Caco-2 (cell line): ENCODE measurements at regions of chr10 and their contacts with region 1.

Region 1: DNA sequence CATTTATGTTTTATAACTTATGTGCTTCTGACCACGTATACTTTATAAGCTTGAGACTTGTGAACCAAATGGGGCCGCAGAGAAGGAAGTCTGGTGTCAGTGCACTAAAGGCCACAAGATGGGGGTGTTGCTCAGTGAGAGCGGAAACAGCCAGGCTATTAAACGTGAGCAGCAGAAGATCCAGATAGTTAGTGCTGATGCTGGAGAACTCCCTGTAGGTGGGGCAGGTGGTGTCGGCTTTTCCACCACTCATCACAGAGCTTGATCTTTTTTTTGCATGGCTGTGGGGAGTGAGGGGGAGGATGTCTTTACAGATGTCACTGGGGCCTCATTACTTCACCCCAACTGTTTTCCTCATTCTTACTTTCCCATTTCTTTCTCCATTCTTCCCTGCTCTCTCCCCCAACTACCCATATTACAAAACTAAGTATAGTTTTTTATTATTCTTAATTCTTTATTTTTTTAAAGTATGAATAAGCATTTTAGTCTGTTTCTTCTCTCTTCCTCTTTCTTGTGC is 34.7 kb downstream of the ACADSB start:
- DNase-seq: peak; percentile 70 to 76
- H3K4me3 ChIP-seq: no peak overlapping the region
- H3K4me3 Mint-ChIP-seq: no peak overlapping the region
- H3K27ac Mint-ChIP-seq: no peak overlapping the region
- H3K4me1 ChIP-seq: no peaks in the 10 kb centered on the region
- H3K4me1 Mint-ChIP-seq: no peaks in the 10 kb centered on the region
- H3K27me3 ChIP-seq: no peaks in the 10 kb centered on the region
- H3K27me3 Mint-ChIP-seq: no peaks in the 10 kb centered on the region
- CTCF ChIP-seq: peak; percentile 81 to 85

Region 2: DNA sequence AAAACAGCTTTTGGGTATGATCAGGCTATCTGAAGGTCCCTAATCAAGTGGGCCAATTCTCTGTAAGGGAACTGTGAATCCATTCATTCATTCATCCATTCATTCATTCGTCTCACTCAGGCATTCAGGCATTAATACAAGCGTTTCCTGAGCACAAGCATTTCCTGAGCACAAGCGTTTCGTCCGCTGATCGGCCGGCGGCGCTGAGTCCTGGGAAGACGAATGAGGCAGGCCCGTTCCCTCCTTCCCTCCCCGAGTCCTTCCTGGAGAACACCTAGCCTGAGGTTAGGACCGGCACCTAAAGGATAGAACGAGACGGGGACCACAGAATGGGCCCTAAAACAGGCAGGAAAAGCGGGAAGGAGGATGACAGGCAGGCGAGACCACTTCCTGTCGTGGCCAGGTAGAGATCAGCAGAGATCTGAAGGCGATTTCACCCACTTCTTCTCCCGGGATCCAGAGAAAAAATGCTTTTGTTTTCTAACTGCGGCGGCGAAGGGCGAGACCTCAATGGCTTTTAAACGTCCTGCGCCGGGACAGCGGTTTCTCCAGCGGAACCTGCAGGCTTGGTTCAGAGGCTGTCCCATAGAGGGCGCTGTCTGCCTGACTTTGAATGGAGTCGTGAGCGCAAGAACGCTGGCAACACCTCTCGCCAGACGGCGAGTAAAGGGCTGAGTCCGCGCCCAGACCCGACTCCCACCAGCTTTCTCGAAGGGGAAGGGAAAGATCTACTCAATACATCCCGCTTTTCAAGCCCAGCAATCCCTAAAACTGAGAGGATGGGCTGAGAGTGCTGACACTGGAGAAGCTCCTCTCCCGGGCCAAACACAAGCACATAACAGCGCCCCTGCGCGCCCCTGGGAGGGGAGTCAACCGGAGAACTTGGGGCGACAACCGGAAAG is 89.4 kb after region 1 on chr10:
- CTCF ChIA-PET with region 1: no interaction called
- POLR2A ChIA-PET with region 1: no interaction called
- intact Hi-C with region 1: loop called (anchors 1 kb)
- DNase-seq: peak; percentile 86 to 88
- H3K4me3 ChIP-seq: no peak overlapping the region
- H3K4me3 Mint-ChIP-seq: peak overlapping the region; percentile 34
- H3K27ac Mint-ChIP-seq: no peak overlapping the region
- H3K4me1 ChIP-seq: peaks cover 20% of the 10 kb centered on the region
- H3K4me1 Mint-ChIP-seq: no peaks in the 10 kb centered on the region
- H3K27me3 ChIP-seq: peaks cover 8% of the 10 kb centered on the region
- H3K27me3 Mint-ChIP-seq: peaks cover 30% of the 10 kb centered on the region
- CTCF ChIP-seq: peak; percentile 93 to 95

Region 3: GRCh38 chr10:123139521-123140163 is 96.2 kb after region 1 on chr10:
- CTCF ChIA-PET with region 1: interaction called, 9 read pairs
- POLR2A ChIA-PET with region 1: no interaction called
- intact Hi-C with region 1: loop called (anchors 2 kb)
- DNase-seq: peak; percentile 82 to 89
- H3K4me3 ChIP-seq: peak overlapping the region; percentile 24
- H3K4me3 Mint-ChIP-seq: peak overlapping the region; percentile 82
- H3K27ac Mint-ChIP-seq: no peak overlapping the region
- H3K4me1 ChIP-seq: peaks cover 16% of the 10 kb centered on the region
- H3K4me1 Mint-ChIP-seq: peaks cover 7% of the 10 kb centered on the region
- H3K27me3 ChIP-seq: peaks cover 6% of the 10 kb centered on the region
- H3K27me3 Mint-ChIP-seq: peaks cover 10% of the 10 kb centered on the region
- CTCF ChIP-seq: no peak

Region 4: DNA sequence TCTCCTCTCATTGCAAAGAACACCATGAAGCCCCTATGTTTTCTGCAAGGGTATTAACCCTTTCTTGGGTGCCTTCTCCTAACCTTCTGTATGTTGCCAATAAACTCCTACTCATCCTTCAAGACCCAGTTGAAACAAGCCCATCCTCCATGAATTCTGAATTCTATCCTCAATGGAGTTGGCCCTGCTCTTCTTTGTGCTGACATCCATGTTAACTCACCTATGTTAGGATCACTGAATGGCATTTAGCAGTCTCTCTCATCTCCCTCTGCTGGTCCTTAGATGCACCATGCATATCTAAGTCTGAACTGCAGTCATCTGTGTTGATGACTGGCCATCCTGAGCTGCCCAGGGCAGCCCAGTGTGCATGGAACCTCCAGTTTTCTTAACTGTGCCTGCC is 240.6 kb after region 1 on chr10:
- CTCF ChIA-PET with region 1: no interaction called
- POLR2A ChIA-PET with region 1: no interaction called
- intact Hi-C with region 1: loop called (anchors 2 kb)
- DNase-seq: no peak
- H3K4me3 ChIP-seq: no peak overlapping the region
- H3K4me3 Mint-ChIP-seq: no peak overlapping the region
- H3K27ac Mint-ChIP-seq: no peak overlapping the region
- H3K4me1 ChIP-seq: no peaks in the 10 kb centered on the region
- H3K4me1 Mint-ChIP-seq: no peaks in the 10 kb centered on the region
- H3K27me3 ChIP-seq: no peaks in the 10 kb centered on the region
- H3K27me3 Mint-ChIP-seq: peaks cover 12% of the 10 kb centered on the region
- CTCF ChIP-seq: peak; percentile 26 to 53

Region 5: DNA sequence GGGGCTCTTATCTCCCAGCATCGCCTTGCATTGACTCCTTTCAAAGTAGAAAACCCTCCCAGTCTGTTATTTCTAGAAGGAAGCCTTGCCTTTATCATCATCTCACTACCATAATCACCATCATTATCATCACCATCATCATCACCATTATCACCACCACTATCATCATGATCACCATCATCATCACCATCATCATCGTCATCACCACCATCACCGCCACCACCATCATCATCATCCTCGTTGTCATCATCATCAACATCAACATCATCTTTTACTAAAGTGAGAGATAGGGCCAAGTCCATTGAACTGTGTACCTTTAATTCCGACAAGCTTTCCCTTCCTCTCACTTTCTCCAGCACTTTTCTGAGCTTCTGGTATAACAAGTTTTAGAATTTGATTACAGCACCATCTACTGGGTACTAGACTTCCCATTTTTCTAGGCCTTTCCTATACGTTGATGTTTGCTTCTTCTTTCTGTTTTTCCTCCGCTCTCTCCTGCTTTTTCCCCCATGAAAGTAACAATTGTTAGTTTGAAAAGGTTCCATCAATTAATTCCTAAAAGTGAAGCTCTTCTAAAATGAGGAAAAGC is 337.1 kb after region 1 on chr10:
- CTCF ChIA-PET with region 1: interaction called, 15 read pairs
- POLR2A ChIA-PET with region 1: no interaction called
- intact Hi-C with region 1: loop called (anchors 1 kb)
- DNase-seq: no peak
- H3K4me3 ChIP-seq: no peak overlapping the region
- H3K4me3 Mint-ChIP-seq: no peak overlapping the region
- H3K27ac Mint-ChIP-seq: no peak overlapping the region
- H3K4me1 ChIP-seq: peaks cover 9% of the 10 kb centered on the region; the same call in 1 of the 2 replicates
- H3K4me1 Mint-ChIP-seq: no peaks in the 10 kb centered on the region
- H3K27me3 ChIP-seq: no peaks in the 10 kb centered on the region; the same call in 1 of the 2 replicates
- H3K27me3 Mint-ChIP-seq: peaks cover 18% of the 10 kb centered on the region
- CTCF ChIP-seq: peak in 1 of 2 experiments; percentile 48

Region 6: DNA sequence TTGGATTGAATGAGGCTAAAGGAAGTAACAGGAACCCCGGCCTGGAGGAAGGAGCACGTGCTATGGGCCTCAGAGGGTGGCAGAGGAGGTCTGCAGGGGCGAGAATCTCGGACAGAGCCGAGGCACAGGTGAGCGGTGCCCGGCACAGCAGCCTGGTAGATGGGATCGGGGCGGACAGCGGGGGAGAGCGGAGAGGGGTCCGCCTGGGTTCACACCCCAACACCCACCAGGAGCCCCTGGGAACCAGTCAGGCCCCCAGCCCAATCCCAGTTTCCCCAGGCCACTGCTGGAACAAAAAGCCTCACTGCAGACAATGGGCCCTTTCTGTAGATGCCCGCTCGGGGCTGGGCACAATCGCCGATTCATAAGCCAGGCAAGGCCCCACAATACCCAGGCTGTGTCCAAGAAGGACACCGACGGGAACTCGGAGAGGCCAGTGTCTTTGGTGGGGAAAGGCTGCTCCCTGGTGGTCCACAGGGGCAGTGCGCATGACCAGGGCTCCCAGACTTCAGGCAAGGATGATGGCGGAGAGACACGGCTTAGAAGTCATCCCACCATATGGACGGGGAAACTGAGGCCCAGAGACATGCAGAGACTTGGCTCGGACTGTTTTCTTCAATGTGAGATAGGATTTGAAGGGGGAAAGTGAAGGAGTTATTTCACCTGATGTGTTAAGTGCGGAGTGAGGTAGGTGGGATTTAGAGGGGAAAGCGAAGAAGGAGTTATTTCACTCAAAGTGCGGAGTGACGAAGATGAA is 515.8 kb after region 1 on chr10:
- CTCF ChIA-PET with region 1: interaction called, 4 read pairs
- POLR2A ChIA-PET with region 1: no interaction called
- intact Hi-C with region 1: loop called (anchors 1 kb)
- DNase-seq: peak; percentile 63 to 75
- H3K4me3 ChIP-seq: no peak overlapping the region
- H3K4me3 Mint-ChIP-seq: no peak overlapping the region
- H3K27ac Mint-ChIP-seq: no peak overlapping the region
- H3K4me1 ChIP-seq: no peaks in the 10 kb centered on the region
- H3K4me1 Mint-ChIP-seq: no peaks in the 10 kb centered on the region
- H3K27me3 ChIP-seq: no peaks in the 10 kb centered on the region
- H3K27me3 Mint-ChIP-seq: peaks cover 13% of the 10 kb centered on the region
- CTCF ChIP-seq: peak; percentile 93 to 96